H1 (cell line): ENCODE measurements at regions of chr2 and their contacts with region 1.

Region 1: GRCh38 chr2:216777650-216778273 is 82.1 kb downstream of the TNP1 start:
- DNase-seq: peak; percentile 58
- H3K4me3 ChIP-seq: no peak overlapping the region
- H3K27ac ChIP-seq: no peak overlapping the region
- H3K4me1 ChIP-seq: peaks cover 0 to 3% (median 0%) of the 10 kb centered on the region in 4 experiments; a peak in 3 of 7 replicates
- H3K27me3 ChIP-seq: no peaks in the 10 kb centered on the region
- CTCF ChIP-seq: peak; percentile 61 to 100 (median 99)
- EP300 ChIP-seq: no peak
- POLR2A ChIP-seq: no peak
- RAD21 ChIP-seq: peak; percentile 87

Region 2: GRCh38 chr2:216717491-216717901 is 60.3 kb before region 1 on chr2:
- CTCF ChIA-PET with region 1: no interaction called
- POLR2A ChIA-PET with region 1: no interaction called
- DNase-seq: no peak
- H3K4me3 ChIP-seq: no peak overlapping the region
- H3K27ac ChIP-seq: no peak overlapping the region
- H3K4me1 ChIP-seq: peaks cover 0 to 2% (median 0%) of the 10 kb centered on the region in 4 experiments; a peak in 1 of 7 replicates
- H3K27me3 ChIP-seq: no peaks in the 10 kb centered on the region
- CTCF ChIP-seq: no peak
- EP300 ChIP-seq: no peak
- POLR2A ChIP-seq: no peak
- RAD21 ChIP-seq: no peak

Region 3: DNA sequence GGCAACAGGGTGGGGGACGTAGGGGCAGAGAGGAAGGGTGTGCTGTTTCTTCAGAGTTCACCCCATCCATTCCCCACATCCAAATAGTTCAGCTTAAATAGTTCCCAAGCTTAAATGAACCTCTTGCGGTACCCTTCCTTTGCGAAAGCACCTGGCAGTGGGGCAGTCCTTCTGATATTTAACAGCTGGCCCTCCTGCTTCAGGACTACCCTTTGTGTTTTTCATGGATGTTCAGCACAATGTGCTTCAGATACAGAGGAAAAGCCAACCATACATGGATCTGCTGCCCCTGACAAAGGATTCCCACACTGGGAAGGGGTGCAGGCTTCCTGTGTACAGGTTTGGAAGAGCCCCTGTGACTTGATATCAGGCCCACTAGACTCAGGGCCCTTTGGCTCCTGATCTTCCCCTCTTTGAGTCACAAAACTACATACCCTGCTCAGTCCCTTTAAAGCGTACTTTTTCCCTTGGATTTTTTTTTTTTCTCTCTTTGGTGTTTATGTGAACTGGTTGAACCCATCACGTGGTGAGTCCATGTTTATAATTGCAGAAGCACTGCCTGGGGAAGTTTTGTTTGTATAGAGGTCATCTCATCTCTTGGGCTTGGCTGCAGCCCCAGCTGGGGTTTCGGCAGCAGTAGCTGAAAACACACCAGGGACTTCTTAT is 37.1 kb before region 1 on chr2:
- CTCF ChIA-PET with region 1: interaction called, 10 read pairs
- POLR2A ChIA-PET with region 1: no interaction called
- DNase-seq: no peak
- H3K4me3 ChIP-seq: no peak overlapping the region
- H3K27ac ChIP-seq: no peak overlapping the region
- H3K4me1 ChIP-seq: peaks cover 0 to 10% (median 1%) of the 10 kb centered on the region in 4 experiments; a peak in 3 of 7 replicates
- H3K27me3 ChIP-seq: no peaks in the 10 kb centered on the region
- CTCF ChIP-seq: no peak
- EP300 ChIP-seq: no peak
- POLR2A ChIP-seq: no peak
- RAD21 ChIP-seq: no peak

Region 4: DNA sequence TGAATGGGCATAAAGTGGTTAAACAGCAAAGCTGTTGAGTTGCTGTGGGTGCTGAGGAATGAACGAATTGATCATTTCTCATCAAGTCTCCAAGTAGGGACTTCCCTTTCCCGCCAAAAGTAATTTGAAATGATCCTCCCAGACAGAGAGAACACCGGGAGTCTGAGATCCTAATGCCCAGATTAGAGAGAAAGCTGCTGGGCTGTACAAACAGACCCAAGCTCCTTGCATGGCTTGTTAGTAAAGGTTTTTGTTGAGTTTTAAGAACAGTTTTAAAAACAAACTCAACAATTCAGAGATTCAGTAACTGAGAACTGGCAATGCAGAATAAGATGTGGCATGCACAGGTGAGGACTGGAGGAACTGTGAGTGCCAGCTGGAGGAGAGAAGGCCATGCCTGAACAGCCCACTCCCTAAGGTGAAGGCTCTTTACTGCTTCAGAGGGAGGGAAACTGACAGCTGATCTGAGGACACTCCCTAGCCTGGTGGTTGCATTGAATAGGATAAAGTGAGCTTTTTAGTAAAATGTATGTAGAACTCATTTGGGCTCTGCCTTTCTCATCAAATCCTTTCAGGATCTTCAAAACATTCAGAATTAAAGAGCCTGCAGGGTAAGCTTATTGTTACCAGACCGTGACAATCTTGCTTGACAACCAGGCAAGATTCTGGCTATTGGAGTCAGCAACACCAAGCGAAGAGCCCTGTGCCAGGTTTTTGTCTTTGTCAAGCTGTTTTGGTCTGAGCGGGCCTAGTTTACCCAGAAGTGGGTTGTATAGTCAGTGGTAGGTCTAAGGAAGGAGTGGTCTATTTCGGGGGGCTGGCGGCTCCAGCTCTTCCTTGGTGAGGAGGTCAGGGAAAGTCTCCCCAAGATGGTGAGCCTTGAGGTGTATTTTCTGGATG is 19.3 kb before region 1 on chr2:
- CTCF ChIA-PET with region 1: interaction called, 16 read pairs
- POLR2A ChIA-PET with region 1: no interaction called
- DNase-seq: no peak
- H3K4me3 ChIP-seq: no peak overlapping the region
- H3K27ac ChIP-seq: no peak overlapping the region
- H3K4me1 ChIP-seq: peaks cover 0 to under 1% (median 0%) of the 10 kb centered on the region in 4 experiments; a peak in 3 of 7 replicates
- H3K27me3 ChIP-seq: no peaks in the 10 kb centered on the region
- CTCF ChIP-seq: no peak
- EP300 ChIP-seq: no peak
- POLR2A ChIP-seq: no peak
- RAD21 ChIP-seq: no peak

Region 5: DNA sequence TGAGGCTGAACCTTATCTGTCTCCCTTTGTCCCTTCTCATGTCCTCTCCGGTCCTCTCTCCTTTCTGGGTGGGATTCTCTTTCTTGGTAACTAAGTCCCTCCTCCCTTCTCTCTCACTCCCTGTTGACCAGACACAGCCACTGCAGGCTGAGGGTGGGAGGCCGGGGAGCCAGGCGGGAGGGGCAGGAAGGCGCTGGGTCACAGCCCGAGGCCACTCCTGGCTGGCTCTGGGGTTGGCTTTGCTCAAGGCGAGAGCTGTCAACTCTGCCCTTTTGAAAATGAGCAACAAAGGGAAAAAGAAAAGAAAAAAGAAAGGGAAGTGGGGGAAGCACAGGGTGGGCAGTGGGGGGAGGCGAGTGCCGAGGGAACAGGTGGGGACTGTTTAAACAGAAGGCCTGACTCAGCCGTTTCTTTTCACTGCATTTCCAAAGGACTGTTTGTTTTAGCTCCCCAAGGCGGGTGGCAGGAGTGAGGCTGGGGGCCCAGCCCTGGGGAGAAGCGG is 11.9 kb before region 1 on chr2:
- CTCF ChIA-PET with region 1: interaction called, 27 read pairs
- POLR2A ChIA-PET with region 1: interaction called, 12 read pairs
- DNase-seq: peak; percentile 75 to 78
- H3K4me3 ChIP-seq: peak overlapping the region in 1 of 4 experiments; percentile 19; a peak in 2 of 8 replicates
- H3K27ac ChIP-seq: no peak overlapping the region; the same call in 1 of the 2 replicates
- H3K4me1 ChIP-seq: peaks cover 4 to 17% (median 8%) of the 10 kb centered on the region in 4 experiments
- H3K27me3 ChIP-seq: no peaks in the 10 kb centered on the region; a peak in 1 of 7 replicates
- CTCF ChIP-seq: peak; percentile 17 to 34 (median 18); a peak in 3 of 4 replicates
- EP300 ChIP-seq: peak in 1 of 2 experiments; percentile 56; a peak in 1 of 3 replicates
- POLR2A ChIP-seq: no peak
- RAD21 ChIP-seq: peak in 1 of 2 experiments; percentile 35; a peak in 2 of 4 replicates

Region 6: DNA sequence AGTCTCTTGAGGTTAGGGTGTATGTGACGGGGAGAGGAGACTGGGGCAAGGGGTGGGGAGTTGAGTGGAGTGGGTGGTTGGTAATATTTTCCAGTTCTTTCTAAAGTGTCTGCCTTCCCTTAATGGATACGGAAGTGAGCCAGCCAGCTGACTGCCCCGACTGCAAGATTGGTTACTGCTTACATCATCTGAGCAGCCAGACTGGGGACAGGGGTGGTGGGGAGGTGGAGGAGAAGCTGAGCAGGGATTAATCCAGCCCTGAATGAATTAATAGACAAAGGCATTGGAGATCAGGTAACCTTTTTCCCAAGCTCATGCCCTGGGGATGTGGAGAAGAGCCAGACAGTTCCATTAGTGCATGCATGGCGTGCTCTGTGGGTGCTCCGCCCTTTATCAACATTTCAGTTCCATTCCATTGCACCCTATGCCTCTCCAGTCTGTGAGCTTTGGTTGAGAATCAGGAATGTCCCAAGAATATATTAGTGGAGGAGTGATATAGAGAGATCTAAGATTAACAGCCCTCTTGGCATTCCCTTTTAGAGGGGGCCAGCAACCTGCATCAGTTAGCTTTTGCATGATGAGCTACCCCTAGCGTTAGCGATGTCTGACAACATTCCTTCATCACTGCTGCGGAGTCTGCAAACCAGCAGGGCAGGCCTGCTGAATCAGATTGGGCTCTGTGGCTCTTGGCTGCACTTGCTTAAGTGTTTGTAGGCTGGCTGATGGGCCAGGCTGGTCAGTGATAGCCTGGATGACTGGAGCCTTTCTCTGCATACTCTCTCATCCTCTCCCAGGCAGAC is 14.7 kb after region 1 on chr2:
- CTCF ChIA-PET with region 1: interaction called, 16 read pairs
- POLR2A ChIA-PET with region 1: no interaction called
- DNase-seq: no peak
- H3K4me3 ChIP-seq: no peak overlapping the region
- H3K27ac ChIP-seq: no peak overlapping the region
- H3K4me1 ChIP-seq: peaks cover 0 to 4% (median 2%) of the 10 kb centered on the region in 4 experiments; a peak in 3 of 7 replicates
- H3K27me3 ChIP-seq: no peaks in the 10 kb centered on the region; a peak in 1 of 7 replicates
- CTCF ChIP-seq: peak in 1 of 3 experiments; percentile 14; a peak in 1 of 4 replicates
- EP300 ChIP-seq: no peak
- POLR2A ChIP-seq: no peak
- RAD21 ChIP-seq: no peak

Region 7: GRCh38 chr2:217277646-217278398 is 500.1 kb after region 1 on chr2:
- CTCF ChIA-PET with region 1: no interaction called
- POLR2A ChIA-PET with region 1: no interaction called
- DNase-seq: no peak
- H3K4me3 ChIP-seq: no peak overlapping the region
- H3K27ac ChIP-seq: no peak overlapping the region
- H3K4me1 ChIP-seq: no peaks in the 10 kb centered on the region
- H3K27me3 ChIP-seq: peaks cover 33 to 63% (median 48%) of the 10 kb centered on the region in 4 experiments
- CTCF ChIP-seq: no peak
- EP300 ChIP-seq: no peak
- POLR2A ChIP-seq: no peak
- RAD21 ChIP-seq: no peak